Sigmoid colon (tissue), 7 donors: ENCODE measurements at regions of chr10 and their contacts with region 1.

Region 1: DNA sequence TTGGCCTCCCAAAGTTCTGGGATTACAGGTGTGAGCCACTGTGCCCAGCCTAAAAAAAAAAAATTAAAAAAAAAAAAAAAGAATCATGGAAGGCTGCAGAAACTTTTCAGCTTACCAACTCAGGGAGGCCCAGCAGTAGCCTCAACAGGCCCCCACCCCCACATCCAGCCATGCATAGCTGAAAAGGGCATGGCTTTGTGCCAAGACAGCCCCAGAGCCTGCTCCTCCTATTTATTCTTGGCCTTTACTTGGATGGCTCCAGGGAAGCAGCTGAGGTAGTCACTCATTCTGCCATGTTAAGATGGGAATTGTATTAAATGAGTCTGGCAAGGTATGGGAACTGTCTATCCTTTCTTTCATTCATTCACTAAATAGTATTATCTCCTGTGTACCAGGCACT is 13.7 kb upstream of the CNNM2 start:
- DNase-seq: no peak
- H3K4me3 ChIP-seq: no peak overlapping the region
- H3K27ac ChIP-seq: no peak overlapping the region
- H3K4me1 ChIP-seq: no peaks in the 10 kb centered on the region
- H3K27me3 ChIP-seq: no peaks in the 10 kb centered on the region
- CTCF ChIP-seq: no peak
- EP300 ChIP-seq: no peak
- POLR2A ChIP-seq: no peak

Region 2: GRCh38 chr10:102461187-102462054 is 442.9 kb before region 1 on chr10:
- intact Hi-C with region 1: no loop called
- DNase-seq: peak; percentile 96
- H3K4me3 ChIP-seq: peak overlapping the region; percentile 43 to 71 (median 58)
- H3K27ac ChIP-seq: peak overlapping the region in 3 of 4 donors; percentile 40 to 67 (median 61)
- H3K4me1 ChIP-seq: peaks cover 0 to 22% (median 12%) of the 10 kb centered on the region in 4 donors
- H3K27me3 ChIP-seq: no peaks in the 10 kb centered on the region
- CTCF ChIP-seq: no peak
- EP300 ChIP-seq: no peak
- POLR2A ChIP-seq: no peak

Region 3: GRCh38 chr10:102835007-102835482 is 69.3 kb before region 1 on chr10:
- intact Hi-C with region 1: loop called (anchors 5 kb)
- DNase-seq: peak; percentile 89
- H3K4me3 ChIP-seq: no peak overlapping the region
- H3K27ac ChIP-seq: no peak overlapping the region
- H3K4me1 ChIP-seq: peaks cover 0 to 8% (median 3%) of the 10 kb centered on the region in 4 donors
- H3K27me3 ChIP-seq: no peaks in the 10 kb centered on the region
- CTCF ChIP-seq: peak; percentile 66 to 89 (median 84)
- EP300 ChIP-seq: no peak
- POLR2A ChIP-seq: no peak

Region 4: GRCh38 chr10:104777086-104777799 is 1872.9 kb after region 1 on chr10:
- intact Hi-C with region 1: no loop called
- DNase-seq: no peak
- H3K4me3 ChIP-seq: no peak overlapping the region
- H3K27ac ChIP-seq: no peak overlapping the region
- H3K4me1 ChIP-seq: no peaks in the 10 kb centered on the region
- H3K27me3 ChIP-seq: no peaks in the 10 kb centered on the region
- CTCF ChIP-seq: no peak
- EP300 ChIP-seq: no peak
- POLR2A ChIP-seq: no peak